ENCODE measurements at regions of chr16 and their contacts with region 1.

Region 1: GRCh38 chr16:11715246-11715947 is 27.3 kb downstream of the TXNDC11 start:
- DNase-seq: no peak
- ATAC-seq: no peak

Region 2: DNA sequence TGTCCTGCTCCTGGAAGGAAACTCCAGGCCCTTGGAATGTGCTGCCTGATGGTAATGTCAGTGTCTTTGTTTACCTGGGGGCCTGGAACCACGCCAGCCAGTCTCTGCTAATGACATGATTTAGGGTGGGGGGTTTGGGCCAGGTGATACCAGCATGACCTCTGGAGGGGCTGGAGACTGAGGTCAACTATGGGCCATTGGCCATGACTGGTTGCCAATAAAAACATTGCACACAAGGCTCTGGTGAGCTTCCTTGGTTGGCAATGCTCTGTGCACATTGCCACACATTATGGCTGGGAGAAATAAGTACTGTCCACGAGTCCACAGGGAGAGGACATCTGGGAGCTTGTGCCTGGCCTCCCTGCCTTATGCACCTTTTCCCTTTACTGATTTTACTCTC is 181.1 kb before region 1 on chr16:
- intact Hi-C with region 1: loop called (anchors 5 kb)
- DNase-seq: no peak
- ATAC-seq: no peak

Measured in Right ventricle myocardium superior (tissue), 1 donor.